A673 (cell line): ENCODE measurements at regions of chr9 and their contacts with region 1.

Region 1: DNA sequence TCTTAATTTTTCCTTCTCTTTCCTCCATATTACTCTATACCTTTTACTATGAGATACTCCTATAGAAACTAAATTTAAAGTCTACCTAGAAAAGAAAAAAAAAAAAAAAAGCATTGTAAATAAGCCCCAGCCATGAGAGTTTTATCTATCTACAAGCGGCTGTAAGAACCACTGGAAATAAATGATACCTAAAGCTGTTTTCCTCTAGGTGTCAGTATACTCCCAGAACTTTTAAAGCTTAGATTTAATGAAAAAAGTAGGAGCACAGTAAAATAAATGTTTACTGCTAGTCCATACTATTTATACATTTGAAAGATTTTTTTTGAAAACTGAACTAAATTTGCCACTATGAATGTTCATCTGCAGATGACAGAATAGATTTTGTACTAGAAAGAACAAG is 26.2 kb downstream of the TYRP1 start:
- DNase-seq: peak; percentile 51
- H3K4me3 ChIP-seq: no peak overlapping the region
- H3K27ac ChIP-seq: no peak overlapping the region
- H3K4me1 ChIP-seq: no peaks in the 10 kb centered on the region
- H3K27me3 ChIP-seq: no peaks in the 10 kb centered on the region
- CTCF ChIP-seq: peak; percentile 70

Region 2: GRCh38 chr9:12819436-12820185 is 100.2 kb after region 1 on chr9:
- CTCF ChIA-PET with region 1: no interaction called
- POLR2A ChIA-PET with region 1: no interaction called
- intact Hi-C with region 1: loop called (anchors 5 kb)
- DNase-seq: peak; percentile 50
- H3K4me3 ChIP-seq: no peak overlapping the region
- H3K27ac ChIP-seq: no peak overlapping the region
- H3K4me1 ChIP-seq: peaks cover 15% of the 10 kb centered on the region
- H3K27me3 ChIP-seq: no peaks in the 10 kb centered on the region
- CTCF ChIP-seq: peak; percentile 66

Region 3: GRCh38 chr9:12884737-12885414 is 165.4 kb after region 1 on chr9:
- CTCF ChIA-PET with region 1: interaction called, 9 read pairs
- POLR2A ChIA-PET with region 1: no interaction called
- intact Hi-C with region 1: loop called (anchors 2 kb)
- DNase-seq: peak; percentile 71
- H3K4me3 ChIP-seq: no peak overlapping the region
- H3K27ac ChIP-seq: no peak overlapping the region
- H3K4me1 ChIP-seq: peaks cover 21% of the 10 kb centered on the region
- H3K27me3 ChIP-seq: no peaks in the 10 kb centered on the region
- CTCF ChIP-seq: peak; percentile 71

Region 4: GRCh38 chr9:13033959-13034693 is 314.7 kb after region 1 on chr9:
- CTCF ChIA-PET with region 1: interaction called, 5 read pairs
- POLR2A ChIA-PET with region 1: no interaction called
- intact Hi-C with region 1: loop called (anchors 5 kb)
- DNase-seq: peak; percentile 80
- H3K4me3 ChIP-seq: peak overlapping the region; percentile 17
- H3K27ac ChIP-seq: no peak overlapping the region
- H3K4me1 ChIP-seq: no peaks in the 10 kb centered on the region
- H3K27me3 ChIP-seq: no peaks in the 10 kb centered on the region
- CTCF ChIP-seq: peak; percentile 82